ENCODE measurements at regions of chr17 and their contacts with region 1.

Region 1: DNA sequence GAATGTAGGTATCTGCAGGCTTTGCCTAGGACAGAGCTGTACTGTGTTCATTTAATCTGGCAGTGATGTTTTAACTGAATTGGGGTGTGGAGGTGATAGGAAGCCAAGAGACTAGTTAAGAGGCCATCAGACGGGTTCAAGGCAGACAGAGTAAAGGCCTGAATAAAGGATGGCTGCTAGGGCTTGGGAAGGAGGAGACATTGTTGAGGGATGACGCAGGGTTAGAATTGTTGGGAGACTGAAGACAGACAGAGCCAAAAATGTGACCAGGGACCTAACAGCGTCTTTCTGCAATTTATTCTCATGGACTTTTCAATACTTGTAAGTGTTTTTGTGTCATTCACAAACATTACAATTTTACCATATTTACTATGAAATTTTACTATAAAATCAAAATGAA is 48.6 kb upstream of the MYH10 start:
- DNase-seq: no peak
- H3K4me3 ChIP-seq: no peak overlapping the region
- H3K27ac ChIP-seq: no peak overlapping the region
- H3K4me1 ChIP-seq: no peaks in the 10 kb centered on the region
- H3K27me3 ChIP-seq: no peaks in the 10 kb centered on the region
- CTCF ChIP-seq: no peak
- POLR2A ChIP-seq: no peak

Region 2: GRCh38 chr17:8727065-8727511 is 48.0 kb after region 1 on chr17:
- intact Hi-C with region 1: loop called (anchors 2 kb)
- DNase-seq: peak in 1 of 2 donors; percentile 77
- H3K4me3 ChIP-seq: no peak overlapping the region
- H3K27ac ChIP-seq: no peak overlapping the region
- H3K4me1 ChIP-seq: no peaks in the 10 kb centered on the region
- H3K27me3 ChIP-seq: no peaks in the 10 kb centered on the region
- CTCF ChIP-seq: no peak
- POLR2A ChIP-seq: no peak

Measured in breast epithelium (tissue), 4 donors.